ENCODE measurements at regions of chr12 and their contacts with region 1.

Region 1: DNA sequence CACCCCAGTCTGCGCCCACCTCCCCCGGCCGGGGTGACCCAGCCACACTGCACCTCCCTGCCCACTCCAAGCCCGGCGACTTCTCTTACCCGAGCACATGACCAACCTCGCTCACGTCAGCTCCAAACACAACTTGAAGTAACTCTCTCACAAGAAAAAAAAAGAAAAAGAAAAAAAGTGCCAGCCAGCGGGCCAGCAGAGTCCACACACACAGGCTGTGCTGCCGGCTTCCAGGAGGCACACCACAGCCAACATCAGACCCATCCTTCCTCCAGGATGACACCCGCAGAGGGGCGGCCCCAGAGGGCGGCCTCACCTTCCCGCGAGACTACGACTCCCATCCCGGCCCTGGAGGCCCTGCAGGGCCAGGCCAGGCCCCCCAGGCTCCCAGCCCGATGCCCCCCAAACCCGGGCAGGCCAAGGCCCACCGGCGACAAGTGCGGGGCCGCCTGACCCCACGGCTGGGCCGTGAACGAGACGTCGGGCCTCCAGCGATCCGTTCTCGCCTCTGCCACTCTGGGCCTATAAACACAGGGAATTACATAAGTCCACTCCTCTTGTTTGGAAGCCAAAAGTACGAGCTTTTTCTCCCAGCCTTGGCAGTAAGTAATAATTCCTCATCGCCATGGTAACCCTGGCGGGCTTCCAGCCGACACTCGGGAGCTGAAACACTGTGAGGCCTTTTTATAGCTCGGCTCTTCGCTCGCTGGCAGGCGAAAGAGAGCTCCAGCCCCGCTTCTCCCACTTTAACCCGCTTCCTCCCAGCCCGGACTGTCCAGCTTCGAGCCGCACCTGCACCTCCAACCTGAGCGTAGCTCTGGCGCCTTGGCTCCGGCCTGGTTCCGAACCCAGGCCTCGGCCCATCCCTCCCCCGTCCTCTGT is 49.1 kb downstream of the NCOR2 start:
- DNase-seq: peak; percentile 95 to 99 (median 96)

Region 2: DNA sequence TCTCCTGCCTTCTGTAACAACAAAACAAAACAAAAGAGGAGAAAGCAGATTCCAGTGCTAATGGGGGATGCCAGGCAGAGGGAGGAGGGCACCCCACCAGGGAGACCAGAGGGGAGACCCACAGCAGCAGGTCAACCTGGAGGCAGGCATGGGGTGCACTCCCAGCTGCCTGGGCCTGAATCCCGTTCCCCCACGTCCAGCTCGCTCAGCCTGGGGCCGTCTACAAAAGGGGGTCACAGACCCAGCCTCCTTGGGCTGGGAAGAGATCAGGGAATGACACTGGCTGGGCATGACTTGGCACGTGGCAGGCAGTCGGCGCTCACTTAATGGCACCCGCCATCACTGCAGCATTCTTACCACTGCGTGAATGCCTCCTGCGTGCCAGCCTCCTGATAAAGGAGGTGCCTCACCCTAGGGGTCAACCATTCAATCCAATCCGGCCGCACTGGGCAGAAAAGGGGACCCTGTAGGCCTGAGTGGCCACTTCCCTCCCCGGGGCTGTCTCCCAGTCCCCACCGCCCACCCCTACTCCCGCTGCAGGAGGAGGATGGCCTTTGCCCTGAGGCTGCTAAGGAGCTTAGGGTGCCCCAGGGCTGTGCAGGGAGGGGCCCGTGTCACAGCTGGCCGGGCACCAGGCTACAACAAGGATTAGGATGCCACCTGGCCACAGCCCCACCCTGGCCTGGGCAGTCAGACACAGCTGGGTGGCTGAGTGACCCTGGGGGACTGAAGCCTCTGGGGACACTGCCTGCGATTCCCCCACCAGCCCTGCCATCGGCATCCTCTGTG is 38.4 kb before region 1 on chr12:
- intact Hi-C with region 1: loop called (anchors 5 kb)
- DNase-seq: peak in 2 of 10 donors; percentile 73 to 74

Region 3: DNA sequence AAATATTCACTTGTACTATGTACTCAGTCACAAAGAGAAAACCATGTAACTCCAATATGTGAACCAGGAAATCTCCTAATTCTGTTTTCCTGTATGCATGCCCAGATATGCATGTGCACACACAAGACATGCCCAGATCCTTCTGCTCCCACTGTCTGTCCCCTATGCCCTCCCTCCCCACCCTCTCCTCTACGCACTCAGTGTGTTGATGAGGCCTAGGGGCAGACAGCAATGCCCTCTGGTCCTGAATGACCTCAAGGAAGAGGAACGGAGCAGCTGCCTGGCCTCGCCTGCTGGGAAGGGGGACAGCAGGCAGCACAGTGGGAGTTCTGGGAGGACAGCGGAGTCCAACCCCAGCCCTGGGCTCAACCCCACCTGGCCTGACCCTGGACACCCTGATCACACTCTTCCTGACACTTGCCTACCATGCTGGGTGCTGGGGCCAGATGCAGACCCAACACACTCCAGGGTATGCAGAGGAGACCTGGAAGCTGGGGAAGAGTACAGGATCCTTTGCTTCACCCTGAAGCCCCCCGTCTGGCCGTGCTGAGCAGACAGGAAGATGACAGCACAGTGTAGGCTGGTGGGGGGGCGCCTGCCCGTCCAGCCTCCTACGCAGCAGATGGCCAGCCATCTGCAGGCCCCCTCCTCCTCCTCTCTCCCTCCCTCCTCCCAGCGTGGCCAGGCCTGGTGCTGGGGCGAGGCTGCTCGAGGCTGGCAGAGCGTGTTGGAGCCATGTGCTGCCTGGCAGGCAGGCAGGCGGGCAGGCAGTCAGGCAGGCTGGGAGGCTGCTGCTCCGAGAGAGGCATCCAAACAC is 155.7 kb after region 1 on chr12:
- intact Hi-C with region 1: loop called (anchors 5 kb)
- DNase-seq: peak; percentile 74 to 98 (median 86)

Region 4: DNA sequence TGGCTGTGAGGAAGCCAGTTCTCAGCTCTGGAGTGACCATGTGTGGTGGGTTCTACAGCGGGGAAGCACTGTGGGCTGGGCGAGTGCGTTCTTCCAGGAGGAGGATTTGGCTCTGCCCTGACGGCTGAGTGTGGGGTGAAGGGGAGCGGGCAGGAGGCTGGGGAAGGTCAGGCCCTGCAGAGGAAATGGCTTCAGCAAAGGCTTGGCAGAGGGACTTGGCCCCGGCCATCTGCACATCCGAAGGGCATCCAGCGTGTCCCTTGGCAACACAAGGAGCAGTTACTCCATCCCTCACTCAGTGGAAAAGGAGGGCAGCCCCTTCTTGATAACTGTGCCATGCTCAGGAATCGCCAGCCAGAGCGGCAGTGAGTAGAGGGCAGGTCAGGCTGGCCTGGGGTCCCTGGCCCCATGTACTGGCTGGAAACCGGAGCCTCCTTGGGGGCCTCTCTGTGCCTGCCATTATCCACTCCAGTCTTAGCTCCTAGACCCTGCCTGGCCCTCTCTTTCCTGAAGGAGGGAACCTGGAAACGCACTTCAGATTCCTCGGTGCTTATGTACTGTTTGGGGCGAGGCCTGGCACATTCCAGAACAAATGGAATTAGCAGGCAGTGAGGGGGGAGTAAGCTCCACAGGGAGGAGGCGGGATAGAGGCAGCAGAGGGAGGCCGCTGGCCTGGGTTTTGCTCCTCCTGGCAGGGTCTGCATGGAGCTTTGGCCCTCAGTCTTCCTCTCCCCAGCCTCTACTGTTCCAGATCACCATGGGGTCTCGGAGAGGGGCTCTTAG is 182.7 kb after region 1 on chr12:
- intact Hi-C with region 1: no loop called
- DNase-seq: peak in 3 of 10 donors; percentile 45 to 90 (median 80)

Region 5: DNA sequence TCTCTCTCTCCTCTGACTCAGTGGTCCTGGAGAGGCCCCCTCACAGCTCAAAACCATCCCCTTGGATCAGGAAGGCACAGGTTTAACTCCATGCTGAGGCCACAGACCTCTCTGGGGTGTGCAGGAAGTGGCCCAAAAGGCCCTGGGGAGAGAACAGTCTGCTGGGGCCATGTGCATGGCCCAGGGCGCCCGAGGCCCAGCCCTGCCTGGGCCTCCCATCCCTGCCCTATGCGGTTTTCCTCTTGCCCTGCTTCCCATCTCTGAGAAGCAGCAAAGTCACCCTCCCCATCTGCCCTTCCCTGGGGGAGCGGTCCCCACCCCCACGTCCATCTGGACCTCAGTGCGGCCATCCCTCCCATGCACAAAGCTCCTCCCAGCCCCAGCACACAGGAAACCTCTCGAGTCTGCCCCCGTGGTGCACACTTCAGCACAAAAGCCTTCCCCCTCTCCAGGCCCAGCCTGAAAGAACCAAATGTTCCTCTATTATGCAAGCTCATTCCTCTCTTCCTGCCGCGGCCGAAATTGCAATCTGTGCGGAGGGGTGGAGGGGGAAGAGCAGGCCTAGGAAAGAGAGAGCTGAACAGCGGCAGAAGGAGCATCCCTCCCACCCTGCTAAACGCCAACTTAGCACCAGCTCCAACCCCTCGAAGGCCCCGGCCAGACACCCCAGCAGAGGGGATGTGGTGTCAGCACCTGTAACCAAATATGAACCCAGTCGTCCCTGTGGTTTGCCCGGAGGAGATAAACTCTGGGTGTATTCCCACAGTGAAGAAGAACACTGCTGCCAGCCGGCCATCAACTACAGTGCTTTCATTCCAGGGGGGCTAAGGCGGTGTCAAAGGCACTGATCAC is 236.9 kb after region 1 on chr12:
- intact Hi-C with region 1: loop called (anchors 5 kb)
- DNase-seq: peak; percentile 75 to 98 (median 89)